ENCODE measurements at regions of chr2 and their contacts with region 1.

Region 1: DNA sequence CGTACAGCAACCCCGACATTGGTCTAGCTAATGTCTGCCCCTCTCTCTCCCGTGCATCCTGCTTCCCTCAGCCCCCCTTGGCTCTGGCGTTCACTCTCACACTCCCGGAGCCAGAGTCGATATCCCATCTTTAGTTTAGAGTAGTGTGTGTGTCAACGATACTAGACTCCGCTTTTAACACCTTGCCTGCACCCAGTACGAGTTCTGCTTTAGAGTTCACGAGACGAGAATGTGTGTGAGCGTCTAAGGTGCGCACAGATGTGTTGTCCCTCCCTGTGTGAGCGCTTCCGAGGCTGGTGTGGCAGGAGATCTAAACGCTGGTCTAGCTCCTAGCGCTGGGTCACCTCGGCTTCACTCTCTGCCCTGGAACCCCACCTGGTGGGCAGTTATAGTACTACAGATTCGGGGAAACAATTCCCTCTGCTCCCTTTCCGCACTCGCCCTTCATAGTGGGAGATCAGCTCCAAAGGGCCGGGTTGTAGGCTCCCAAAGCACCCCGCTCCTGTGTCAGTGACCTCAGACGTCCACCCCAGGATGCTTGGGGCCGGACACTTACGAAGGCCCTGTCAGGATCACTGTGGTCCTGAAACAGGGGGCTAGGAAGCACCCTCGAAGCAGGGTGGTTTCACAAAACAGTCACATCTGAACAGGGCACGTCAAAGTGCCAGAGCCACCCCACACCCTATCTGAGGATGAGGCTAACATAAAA is 2.6 kb upstream of the CYP26B1 start:
- DNase-seq: peak; percentile 75
- ATAC-seq: peak; percentile 85
- H3K4me3 ChIP-seq: peak overlapping the region in 2 of 3 experiments; percentile 46 to 70; a peak in 3 of 6 replicates
- H3K27ac ChIP-seq: no peak overlapping the region
- H3K4me1 ChIP-seq: peaks cover 30% of the 10 kb centered on the region
- H3K27me3 ChIP-seq: peaks cover 38 to 93% of the 10 kb centered on the region in 2 experiments
- CTCF ChIP-seq: peak; percentile 97
- EP300 ChIP-seq: no peak
- POLR2A ChIP-seq: no peak
- RAD21 ChIP-seq: peak; percentile 89

Region 2: GRCh38 chr2:71798266-71799012 is 351.9 kb before region 1 on chr2:
- CTCF ChIA-PET with region 1: interaction called, 4 read pairs
- POLR2A ChIA-PET with region 1: no interaction called
- in situ Hi-C with region 1: loop called (anchors 10 kb)
- intact Hi-C with region 1: loop called (anchors 1 kb)
- DNase-seq: peak; percentile 61
- ATAC-seq: peak; percentile 92
- H3K4me3 ChIP-seq: no peak overlapping the region
- H3K27ac ChIP-seq: no peak overlapping the region
- H3K4me1 ChIP-seq: peaks cover 5% of the 10 kb centered on the region; the same call in 1 of the 2 replicates
- H3K27me3 ChIP-seq: peaks cover 0 to 31% of the 10 kb centered on the region in 2 experiments; a peak in 4 of 5 replicates
- CTCF ChIP-seq: peak; percentile 88
- EP300 ChIP-seq: no peak
- POLR2A ChIP-seq: no peak
- RAD21 ChIP-seq: peak; percentile 92

Region 3: DNA sequence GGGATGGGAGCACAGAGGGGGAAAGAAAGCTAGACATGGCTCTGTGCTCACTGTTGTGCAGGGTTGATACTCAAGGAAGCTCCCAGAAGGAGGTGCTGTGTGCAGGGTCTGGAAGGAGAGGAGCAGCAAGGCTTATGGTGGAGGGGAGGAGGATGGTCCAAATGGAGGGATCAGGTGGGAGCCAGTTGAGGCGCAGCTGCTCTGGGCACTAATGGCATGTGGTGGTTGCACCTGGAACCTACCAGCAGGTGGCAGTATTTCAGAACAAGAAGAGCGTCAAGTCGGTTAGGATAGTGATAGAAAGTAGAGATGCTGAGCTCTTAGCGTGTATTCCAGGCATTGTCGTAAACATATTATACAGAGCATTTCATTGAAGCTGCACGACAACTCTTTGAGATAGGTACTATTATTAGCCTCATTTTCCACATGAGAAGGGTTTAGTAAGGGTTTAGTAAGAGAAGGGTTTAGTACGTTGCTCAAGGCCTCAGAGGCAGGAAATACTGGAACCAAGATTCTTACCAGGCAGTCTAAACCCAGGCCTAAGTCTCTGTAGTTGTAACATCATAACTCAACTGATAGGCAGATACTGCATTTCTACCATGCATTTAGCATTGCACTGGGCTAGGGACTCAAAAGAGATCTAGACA is 226.3 kb before region 1 on chr2:
- CTCF ChIA-PET with region 1: interaction called, 56 read pairs
- POLR2A ChIA-PET with region 1: interaction called, 9 read pairs
- in situ Hi-C with region 1: loop called (anchors 5 kb)
- intact Hi-C with region 1: loop called (anchors 1 kb)
- DNase-seq: peak; percentile 76
- ATAC-seq: peak; percentile 89
- H3K4me3 ChIP-seq: no peak overlapping the region
- H3K27ac ChIP-seq: no peak overlapping the region
- H3K4me1 ChIP-seq: no peaks in the 10 kb centered on the region
- H3K27me3 ChIP-seq: peaks cover 5 to 45% of the 10 kb centered on the region in 2 experiments; a peak in 4 of 5 replicates
- CTCF ChIP-seq: peak; percentile 93
- EP300 ChIP-seq: no peak
- POLR2A ChIP-seq: no peak
- RAD21 ChIP-seq: peak; percentile 78; the same call in 1 of the 2 replicates

Region 4: DNA sequence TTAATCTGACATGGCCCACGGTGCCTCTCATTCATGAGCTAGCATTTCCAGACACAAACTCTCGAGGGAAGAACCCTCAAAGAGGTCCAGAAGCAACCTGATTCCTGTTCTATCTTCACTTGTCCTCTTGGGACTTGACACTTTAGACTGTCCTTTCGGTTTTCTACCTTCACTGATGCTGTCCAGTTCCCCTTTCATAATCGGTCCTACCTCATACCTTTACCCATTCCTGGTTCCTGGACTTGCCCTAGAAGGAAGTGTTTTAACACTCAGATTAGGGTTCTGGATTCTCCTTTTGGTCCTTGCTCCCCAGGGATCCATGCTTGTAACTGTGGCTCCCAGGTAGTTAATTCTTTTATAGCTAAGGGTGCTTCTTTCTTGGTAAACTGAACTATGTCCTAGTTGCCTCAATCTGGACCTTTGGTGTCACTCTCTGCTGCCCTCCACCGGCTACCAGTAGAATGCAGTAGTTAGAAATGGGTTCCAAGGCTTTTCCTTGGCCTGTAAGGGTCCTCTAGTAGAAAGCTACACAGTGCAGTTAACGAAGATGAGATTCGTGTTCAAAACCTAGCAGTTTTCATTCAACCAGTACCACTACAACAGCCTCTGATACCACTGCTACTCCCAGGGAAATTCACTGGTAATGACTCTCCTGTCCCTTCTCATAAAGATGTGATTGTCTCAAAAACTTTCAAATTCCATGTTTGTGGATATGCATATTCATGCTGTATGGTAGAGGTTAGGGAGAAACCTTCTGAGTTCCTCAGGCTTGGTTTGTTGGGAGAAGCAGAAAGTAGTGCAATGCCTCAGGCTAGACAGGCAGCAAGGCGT is 175.5 kb after region 1 on chr2:
- CTCF ChIA-PET with region 1: no interaction called
- POLR2A ChIA-PET with region 1: no interaction called
- in situ Hi-C with region 1: no loop called
- intact Hi-C with region 1: loop called (anchors 1 kb)
- DNase-seq: peak; percentile 50
- ATAC-seq: peak; percentile 90
- H3K4me3 ChIP-seq: no peak overlapping the region
- H3K27ac ChIP-seq: no peak overlapping the region
- H3K4me1 ChIP-seq: no peaks in the 10 kb centered on the region
- H3K27me3 ChIP-seq: no peaks in the 10 kb centered on the region
- CTCF ChIP-seq: peak; percentile 73
- EP300 ChIP-seq: no peak
- POLR2A ChIP-seq: no peak
- RAD21 ChIP-seq: peak; percentile 47; the same call in 1 of the 2 replicates

Region 5: GRCh38 chr2:72745679-72746368 is 595.5 kb after region 1 on chr2:
- CTCF ChIA-PET with region 1: no interaction called
- POLR2A ChIA-PET with region 1: no interaction called
- in situ Hi-C with region 1: loop called (anchors 5 kb)
- intact Hi-C with region 1: loop called (anchors 5 kb)
- DNase-seq: peak; percentile 81
- ATAC-seq: peak; percentile 62; the same call in 2 of the 3 replicates
- H3K4me3 ChIP-seq: no peak overlapping the region
- H3K27ac ChIP-seq: no peak overlapping the region
- H3K4me1 ChIP-seq: peaks cover 21% of the 10 kb centered on the region
- H3K27me3 ChIP-seq: no peaks in the 10 kb centered on the region
- CTCF ChIP-seq: peak; percentile 85
- EP300 ChIP-seq: no peak
- POLR2A ChIP-seq: no peak
- RAD21 ChIP-seq: peak; percentile 87

Measured in HepG2 (cell line).